ENCODE measurements at regions of chr17 and their contacts with region 1.

Region 1: GRCh38 chr17:64129764-64130558 is at the start of gene ERN1:
- DNase-seq: peak; percentile 91
- ATAC-seq: peak; percentile 93
- H3K4me3 ChIP-seq: peak within 1 kb of the TSS; percentile 88
- H3K27ac ChIP-seq: peak within 1 kb of the TSS; percentile 70
- H3K4me1 ChIP-seq: peaks cover 6% of the 10 kb centered on the region
- H3K27me3 ChIP-seq: no peaks in the 10 kb centered on the region
- CTCF ChIP-seq: no peak
- POLR2A ChIP-seq: peak; percentile 94
- RAD21 ChIP-seq: no peak; the same call in none of the 2 replicates
- total RNA-seq, gene ERN1: 2.2 and 2.7 TPM in 2 replicates

Region 2: DNA sequence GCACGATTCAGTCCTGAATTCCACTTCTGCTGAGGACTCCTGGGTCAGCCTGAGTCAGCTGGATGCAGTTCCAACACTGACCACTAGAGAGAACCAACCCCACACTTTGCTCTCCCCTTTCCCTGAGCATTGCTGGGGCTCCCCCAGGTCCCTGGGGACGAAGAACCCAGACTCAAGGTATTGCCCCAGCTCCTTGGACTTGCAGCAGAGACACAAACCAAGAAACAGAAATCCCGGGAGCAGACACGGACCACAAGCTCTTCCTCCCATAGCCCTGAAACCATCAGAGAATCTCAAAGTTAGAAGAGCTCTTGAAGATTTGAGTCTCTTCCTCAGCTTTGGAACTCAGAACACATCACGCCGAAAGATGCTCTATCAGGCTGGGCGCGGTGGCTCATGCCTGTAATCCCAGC is 210.6 kb before region 1 on chr17:
- CTCF ChIA-PET with region 1: interaction called, 5 read pairs
- POLR2A ChIA-PET with region 1: no interaction called
- dilution Hi-C with region 1: no loop called
- in situ Hi-C with region 1: loop called (anchors 5 kb)
- intact Hi-C with region 1: loop called (anchors 2 kb)
- DNase-seq: peak; percentile 51
- ATAC-seq: peak; percentile 100
- H3K4me3 ChIP-seq: no peak overlapping the region
- H3K27ac ChIP-seq: no peak overlapping the region
- H3K4me1 ChIP-seq: no peaks in the 10 kb centered on the region
- H3K27me3 ChIP-seq: peaks cover 27% of the 10 kb centered on the region
- CTCF ChIP-seq: peak; percentile 86
- POLR2A ChIP-seq: no peak
- RAD21 ChIP-seq: peak; percentile 88

Region 3: GRCh38 chr17:64032081-64032480 is 97.9 kb before region 1 on chr17:
- CTCF ChIA-PET with region 1: interaction called, 74 read pairs
- POLR2A ChIA-PET with region 1: interaction called, 3 read pairs
- dilution Hi-C with region 1: no loop called
- in situ Hi-C with region 1: loop called (anchors 5 kb)
- intact Hi-C with region 1: loop called (anchors 1 kb)
- DNase-seq: peak; percentile 34
- ATAC-seq: no peak
- H3K4me3 ChIP-seq: no peak overlapping the region
- H3K27ac ChIP-seq: no peak overlapping the region
- H3K4me1 ChIP-seq: no peaks in the 10 kb centered on the region
- H3K27me3 ChIP-seq: no peaks in the 10 kb centered on the region
- CTCF ChIP-seq: no peak
- POLR2A ChIP-seq: no peak
- RAD21 ChIP-seq: no peak

Region 4: GRCh38 chr17:64081802-64082799 is 47.9 kb before region 1 on chr17:
- CTCF ChIA-PET with region 1: no interaction called
- POLR2A ChIA-PET with region 1: no interaction called
- dilution Hi-C with region 1: no loop called
- in situ Hi-C with region 1: no loop called
- intact Hi-C with region 1: loop called (anchors 5 kb)
- DNase-seq: peak; percentile 82
- ATAC-seq: peak; percentile 57
- H3K4me3 ChIP-seq: no peak overlapping the region
- H3K27ac ChIP-seq: peak overlapping the region; percentile 7; the same call in 1 of the 2 replicates
- H3K4me1 ChIP-seq: peaks cover 18% of the 10 kb centered on the region
- H3K27me3 ChIP-seq: no peaks in the 10 kb centered on the region
- CTCF ChIP-seq: no peak
- POLR2A ChIP-seq: no peak
- RAD21 ChIP-seq: no peak

Region 5: DNA sequence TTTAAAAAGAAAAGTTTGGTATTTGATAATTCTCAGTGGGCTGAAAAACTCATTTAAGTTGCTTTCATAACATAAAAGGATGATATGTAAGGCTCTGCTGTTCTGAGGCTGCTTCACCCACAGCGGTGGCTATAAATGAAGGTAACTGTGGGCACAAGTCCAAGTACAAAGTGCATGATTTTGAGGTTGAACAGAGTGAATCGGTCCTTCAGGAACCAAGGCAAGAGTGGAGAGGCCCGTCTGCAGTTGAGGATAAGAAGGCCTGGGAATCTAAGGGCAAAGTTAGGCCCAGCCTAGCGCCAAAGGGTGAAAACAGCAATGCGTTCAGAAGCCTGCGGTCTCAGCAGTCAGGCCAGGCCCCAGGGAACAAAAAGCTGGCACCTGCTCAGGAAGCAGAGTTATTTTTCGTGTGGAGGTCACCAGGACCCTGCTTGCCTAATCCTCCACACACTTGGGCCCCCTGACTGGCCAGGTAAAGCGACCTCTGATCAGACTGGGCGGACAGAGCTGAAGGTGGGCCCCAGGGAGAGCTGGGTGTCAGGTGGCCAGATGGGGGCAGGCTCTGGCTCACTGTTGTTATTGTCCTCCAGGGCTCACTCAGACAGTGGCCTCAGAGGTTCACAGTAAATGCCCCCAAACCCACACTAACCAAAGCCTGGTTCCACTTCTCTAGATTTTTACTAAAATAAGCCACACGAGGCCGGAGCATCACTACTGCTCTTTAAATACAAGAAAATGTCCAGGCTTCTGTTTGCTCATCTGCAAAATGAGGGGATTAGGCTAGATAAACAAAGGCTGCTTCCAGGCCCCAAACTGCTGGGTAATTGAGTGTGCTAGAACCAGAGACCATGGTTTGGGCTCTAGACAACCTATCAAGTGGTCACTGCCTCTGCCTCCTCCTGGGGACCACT is 86.6 kb after region 1 on chr17:
- CTCF ChIA-PET with region 1: no interaction called
- POLR2A ChIA-PET with region 1: no interaction called
- dilution Hi-C with region 1: no loop called
- in situ Hi-C with region 1: no loop called
- intact Hi-C with region 1: no loop called
- DNase-seq: peak; percentile 32
- ATAC-seq: peak; percentile 10
- H3K4me3 ChIP-seq: no peak overlapping the region
- H3K27ac ChIP-seq: peak overlapping the region; percentile 80; the same call in 1 of the 2 replicates
- H3K4me1 ChIP-seq: peaks cover 36% of the 10 kb centered on the region
- H3K27me3 ChIP-seq: no peaks in the 10 kb centered on the region
- CTCF ChIP-seq: no peak
- POLR2A ChIP-seq: no peak
- RAD21 ChIP-seq: no peak

Region 6: DNA sequence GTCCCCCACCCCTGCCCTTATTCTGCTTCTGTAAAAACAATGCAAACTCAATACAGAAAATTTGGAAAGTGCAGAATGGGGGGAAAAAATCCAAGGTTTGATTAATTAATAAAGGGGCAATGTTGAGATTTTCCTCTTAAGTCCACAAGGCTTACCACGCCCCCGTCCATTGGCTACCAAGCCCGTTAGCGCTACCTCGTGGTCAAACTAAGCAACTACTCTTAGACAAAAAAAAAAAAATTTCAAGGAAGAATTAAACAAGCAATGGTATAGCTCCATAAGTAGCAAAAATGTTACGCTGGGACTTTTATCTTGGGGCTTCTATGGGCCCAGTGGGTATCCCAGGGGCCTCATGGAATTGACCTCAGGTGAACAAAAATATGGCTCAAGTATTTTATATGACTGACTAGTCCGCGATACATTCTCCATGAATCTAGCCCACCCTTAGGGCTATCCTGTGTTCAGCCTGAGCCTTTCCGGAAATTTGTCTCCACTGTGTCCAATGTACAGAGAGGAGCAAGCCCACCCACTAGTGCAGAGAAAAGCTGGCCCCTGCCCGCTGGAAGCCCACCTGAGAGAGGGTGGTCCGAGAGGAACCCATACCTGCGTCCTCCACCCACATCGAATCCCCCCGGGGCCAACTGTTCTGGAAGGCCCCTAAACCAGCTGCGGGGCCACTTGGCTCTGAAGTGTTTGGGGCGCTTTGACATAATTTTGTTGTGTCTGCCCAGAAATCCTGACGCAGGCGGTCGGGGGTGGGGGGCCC is 152.2 kb after region 1 on chr17:
- CTCF ChIA-PET with region 1: interaction called, 5 read pairs
- POLR2A ChIA-PET with region 1: interaction called, 3 read pairs
- dilution Hi-C with region 1: no loop called
- in situ Hi-C with region 1: no loop called
- intact Hi-C with region 1: loop called (anchors 1 kb)
- DNase-seq: peak; percentile 83
- ATAC-seq: peak; percentile 88
- H3K4me3 ChIP-seq: no peak overlapping the region
- H3K27ac ChIP-seq: no peak overlapping the region
- H3K4me1 ChIP-seq: no peaks in the 10 kb centered on the region; the same call in 1 of the 2 replicates
- H3K27me3 ChIP-seq: peaks cover 7% of the 10 kb centered on the region
- CTCF ChIP-seq: peak; percentile 87
- POLR2A ChIP-seq: no peak
- RAD21 ChIP-seq: peak; percentile 92